ENCODE measurements at regions of chr2 and their contacts with region 1.

Region 1: GRCh38 chr2:86221066-86221684 is 21.9 kb downstream of the MRPL35 start:
- DNase-seq: peak; percentile 52
- H3K4me3 ChIP-seq: no peak overlapping the region
- H3K27ac ChIP-seq: peak overlapping the region in 3 of 4 donors; percentile 75 to 87 (median 78)
- H3K4me1 ChIP-seq: peaks cover 4 to 28% (median 18%) of the 10 kb centered on the region in 4 donors
- H3K27me3 ChIP-seq: no peaks in the 10 kb centered on the region
- CTCF ChIP-seq: peak; percentile 68 to 93 (median 87)
- EP300 ChIP-seq: no peak
- POLR2A ChIP-seq: no peak

Region 2: GRCh38 chr2:85949280-85949679 is 271.9 kb before region 1 on chr2:
- in situ Hi-C with region 1: no loop called
- intact Hi-C with region 1: no loop called
- DNase-seq: no peak
- H3K4me3 ChIP-seq: no peak overlapping the region
- H3K27ac ChIP-seq: no peak overlapping the region
- H3K4me1 ChIP-seq: no peaks in the 10 kb centered on the region
- H3K27me3 ChIP-seq: no peaks in the 10 kb centered on the region
- CTCF ChIP-seq: no peak
- EP300 ChIP-seq: no peak
- POLR2A ChIP-seq: no peak

Region 3: GRCh38 chr2:86337244-86337836 is 116.2 kb after region 1 on chr2 and contains the start of gene REEP1:
- in situ Hi-C with region 1: no loop called
- intact Hi-C with region 1: loop called (anchors 10 kb)
- DNase-seq: no peak
- H3K4me3 ChIP-seq: peak within 1 kb of the TSS; percentile 37 to 65 (median 62)
- H3K27ac ChIP-seq: peak within 1 kb of the TSS; percentile 37 to 73 (median 69)
- H3K4me1 ChIP-seq: peaks cover 0 to 22% (median 15%) of the 10 kb centered on the region in 4 donors
- H3K27me3 ChIP-seq: peaks cover 68% of the 10 kb centered on the region
- CTCF ChIP-seq: no peak
- EP300 ChIP-seq: no peak
- POLR2A ChIP-seq: no peak
- total RNA-seq, gene REEP1: 14.1 to 196 (median 32.3) TPM

Region 4: DNA sequence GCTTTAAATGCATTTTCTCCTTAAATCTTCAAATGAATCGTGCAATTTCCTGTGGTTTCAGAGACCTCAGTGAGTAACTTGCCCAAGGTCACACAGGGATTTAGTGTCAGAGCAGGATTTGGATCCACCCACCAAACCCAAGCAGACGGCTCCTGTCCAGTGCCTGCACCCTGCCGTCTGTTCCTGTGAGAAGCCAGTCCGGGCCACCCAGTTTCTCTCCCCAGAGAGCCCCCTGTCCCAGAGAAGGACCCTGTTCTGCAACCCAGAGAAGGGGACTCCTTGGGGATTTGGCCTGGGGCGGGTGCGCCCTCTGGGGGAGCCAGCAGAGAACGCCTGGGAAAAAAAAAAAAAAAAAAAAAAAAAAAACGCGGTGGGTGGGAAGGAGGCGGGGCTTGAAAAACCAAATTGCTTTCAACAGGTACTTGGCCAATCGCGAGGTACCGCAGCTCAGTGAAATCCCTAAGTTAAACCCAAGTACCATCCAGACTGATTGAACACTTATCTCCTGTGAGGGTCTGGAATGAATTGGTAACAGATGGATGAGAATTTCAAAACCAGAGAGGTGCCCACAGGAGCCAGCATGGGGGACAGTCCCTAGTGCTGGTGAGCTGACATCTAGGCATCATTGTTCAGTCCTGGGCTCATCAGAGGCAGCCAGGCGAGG is 147.1 kb after region 1 on chr2:
- in situ Hi-C with region 1: loop called in 3 of 4 experiments (anchors 10 to 25 kb)
- intact Hi-C with region 1: loop called (anchors 2 kb)
- DNase-seq: peak; percentile 50
- H3K4me3 ChIP-seq: peak overlapping the region in 1 of 4 donors; percentile 1
- H3K27ac ChIP-seq: peak overlapping the region in 1 of 4 donors; percentile 45
- H3K4me1 ChIP-seq: peaks cover 6 to 36% (median 9%) of the 10 kb centered on the region in 4 donors
- H3K27me3 ChIP-seq: no peaks in the 10 kb centered on the region
- CTCF ChIP-seq: peak; percentile 60 to 71 (median 65)
- EP300 ChIP-seq: no peak
- POLR2A ChIP-seq: no peak

Region 5: GRCh38 chr2:86440631-86441391 is 219.6 kb after region 1 on chr2 and contains the start of gene KDM3A:
- in situ Hi-C with region 1: loop called in 1 of 4 experiments (anchors 10 kb)
- intact Hi-C with region 1: no loop called
- DNase-seq: peak; percentile 100
- H3K4me3 ChIP-seq: peak within 1 kb of the TSS; percentile 56 to 85 (median 64)
- H3K27ac ChIP-seq: peak within 1 kb of the TSS; percentile 96 to 99 (median 98)
- H3K4me1 ChIP-seq: peaks cover 13 to 36% (median 17%) of the 10 kb centered on the region in 4 donors
- H3K27me3 ChIP-seq: no peaks in the 10 kb centered on the region
- CTCF ChIP-seq: peak in 1 of 5 experiments; percentile 27
- EP300 ChIP-seq: no peak
- POLR2A ChIP-seq: peak; percentile 96
- total RNA-seq, gene KDM3A: 40.4 to 173 (median 55.0) TPM

Region 6: GRCh38 chr2:86808315-86809161 is 587.4 kb after region 1 on chr2:
- in situ Hi-C with region 1: no loop called
- intact Hi-C with region 1: no loop called
- DNase-seq: peak; percentile 93
- H3K4me3 ChIP-seq: peak overlapping the region; percentile 13 to 56 (median 33)
- H3K27ac ChIP-seq: peak overlapping the region in 3 of 4 donors; percentile 5 to 27 (median 26)
- H3K4me1 ChIP-seq: peaks cover 6 to 23% (median 21%) of the 10 kb centered on the region in 4 donors
- H3K27me3 ChIP-seq: peaks cover 67% of the 10 kb centered on the region
- CTCF ChIP-seq: peak; percentile 87 to 96 (median 89)
- EP300 ChIP-seq: no peak
- POLR2A ChIP-seq: no peak

Measured in transverse colon (tissue), 4 donors.